Posterior vena cava (tissue), 2 donors: ENCODE measurements at regions of chr16 and their contacts with region 1.

Region 1: DNA sequence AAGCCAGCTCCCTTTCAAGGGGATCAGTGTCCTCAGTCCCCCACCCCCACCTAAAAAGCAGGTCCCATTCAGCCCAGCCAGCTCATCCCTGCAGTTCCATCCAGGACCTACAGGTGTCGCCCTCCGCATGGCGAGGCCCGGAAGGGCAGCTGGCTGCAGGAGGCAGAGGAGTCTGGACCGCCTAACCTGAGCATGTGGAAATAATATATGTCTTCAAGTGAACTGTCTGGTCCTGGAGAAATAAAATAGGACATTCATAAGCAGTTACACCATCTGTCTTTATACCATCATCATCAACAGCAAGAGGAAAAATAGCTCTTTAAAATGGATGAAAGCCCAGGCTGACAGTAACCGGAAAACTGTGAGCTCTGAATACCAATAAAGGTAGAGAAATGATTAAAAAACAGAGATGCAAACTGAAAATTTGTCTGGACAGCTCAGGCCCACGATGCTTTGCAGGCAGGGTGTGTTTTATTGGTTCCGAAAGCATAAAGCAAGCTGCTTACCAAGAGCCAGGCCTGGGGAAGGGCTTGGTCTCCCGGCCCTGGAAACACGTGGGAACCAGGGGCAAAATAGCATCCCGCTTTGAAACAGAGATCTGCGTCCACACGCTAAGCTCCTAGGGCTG is 215.2 kb downstream of the ZFHX3 start:
- DNase-seq: peak; percentile 94

Region 2: GRCh38 chr16:72952811-72953595 is 120.3 kb after region 1 on chr16:
- intact Hi-C with region 1: loop called in 1 of 2 experiments (anchors 10 kb)
- DNase-seq: no peak

Region 3: GRCh38 chr16:73196670-73197069 is 363.9 kb after region 1 on chr16:
- intact Hi-C with region 1: loop called (anchors 10 kb)
- DNase-seq: no peak

Region 4: DNA sequence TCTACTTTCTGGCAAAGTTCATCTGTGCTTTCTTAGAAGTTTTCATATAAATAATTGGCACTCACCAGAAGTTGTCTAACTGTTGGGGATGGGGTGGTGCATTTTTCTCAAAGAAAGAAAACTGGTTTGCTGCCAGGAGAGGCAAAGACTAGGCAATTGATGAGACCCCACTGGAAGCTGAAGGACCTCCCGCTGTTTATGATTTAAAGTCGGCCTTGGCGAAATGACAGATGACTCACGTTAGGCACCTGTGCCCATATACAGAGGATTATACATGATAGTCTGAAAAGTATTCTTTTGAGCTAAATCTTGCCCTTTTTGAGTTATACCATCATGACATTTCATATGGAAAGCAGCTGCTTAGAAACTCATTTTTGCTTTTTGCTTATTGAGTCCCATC is 408.2 kb after region 1 on chr16:
- intact Hi-C with region 1: no loop called
- DNase-seq: no peak